Panc1 (cell line): ENCODE measurements at regions of chr9 and their contacts with region 1.

Region 1: DNA sequence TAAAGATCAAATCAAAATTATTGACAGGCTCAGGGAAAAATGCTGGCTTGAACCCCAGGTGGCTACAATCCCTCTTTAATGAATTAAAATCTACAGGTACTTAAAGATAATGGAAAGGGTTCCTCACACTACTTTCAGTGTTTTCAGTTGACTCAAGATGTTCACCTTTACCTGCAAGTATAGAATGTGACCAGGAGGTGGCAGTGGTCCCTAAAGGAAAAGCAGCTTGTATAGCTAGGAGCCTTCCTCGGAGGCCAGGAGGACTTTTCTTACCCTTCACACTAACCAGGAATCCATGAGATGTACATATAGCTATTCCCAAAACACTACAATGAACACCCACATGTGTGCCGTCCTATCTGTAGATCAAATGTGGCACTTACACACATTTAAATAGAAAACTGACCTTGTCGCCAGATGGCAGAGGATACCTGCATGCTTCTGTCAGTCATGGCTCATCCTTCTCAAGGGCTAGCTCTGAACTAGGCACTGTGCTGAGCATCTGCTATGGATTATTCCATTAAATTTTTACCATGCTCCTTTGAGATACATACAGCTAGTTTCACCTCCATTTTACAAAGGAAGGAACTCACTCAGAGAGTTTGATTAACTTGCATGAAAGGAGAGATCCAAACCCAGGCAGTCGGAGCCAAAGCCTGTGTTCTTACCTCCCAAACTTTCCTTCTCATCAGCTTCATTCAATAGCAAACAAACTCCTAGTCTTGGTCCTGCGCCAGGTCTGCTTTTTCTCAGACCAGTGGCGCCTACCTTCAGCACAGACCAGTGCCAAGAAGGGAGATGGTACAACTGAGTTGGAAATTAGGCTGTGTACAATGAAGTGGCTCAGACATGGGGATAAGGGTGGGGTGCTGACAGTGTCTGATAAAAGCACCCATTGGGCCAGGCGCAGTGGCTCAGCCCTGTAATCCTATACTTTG is 24.5 kb downstream of the C9orf152 start:
- DNase-seq: peak; percentile 50
- ATAC-seq: peak; percentile 91
- H3K4me3 ChIP-seq: no peak overlapping the region
- H3K27ac ChIP-seq: no peak overlapping the region
- H3K4me1 ChIP-seq: no peaks in the 10 kb centered on the region
- H3K27me3 ChIP-seq: no peaks in the 10 kb centered on the region
- CTCF ChIP-seq: peak; percentile 69

Region 2: DNA sequence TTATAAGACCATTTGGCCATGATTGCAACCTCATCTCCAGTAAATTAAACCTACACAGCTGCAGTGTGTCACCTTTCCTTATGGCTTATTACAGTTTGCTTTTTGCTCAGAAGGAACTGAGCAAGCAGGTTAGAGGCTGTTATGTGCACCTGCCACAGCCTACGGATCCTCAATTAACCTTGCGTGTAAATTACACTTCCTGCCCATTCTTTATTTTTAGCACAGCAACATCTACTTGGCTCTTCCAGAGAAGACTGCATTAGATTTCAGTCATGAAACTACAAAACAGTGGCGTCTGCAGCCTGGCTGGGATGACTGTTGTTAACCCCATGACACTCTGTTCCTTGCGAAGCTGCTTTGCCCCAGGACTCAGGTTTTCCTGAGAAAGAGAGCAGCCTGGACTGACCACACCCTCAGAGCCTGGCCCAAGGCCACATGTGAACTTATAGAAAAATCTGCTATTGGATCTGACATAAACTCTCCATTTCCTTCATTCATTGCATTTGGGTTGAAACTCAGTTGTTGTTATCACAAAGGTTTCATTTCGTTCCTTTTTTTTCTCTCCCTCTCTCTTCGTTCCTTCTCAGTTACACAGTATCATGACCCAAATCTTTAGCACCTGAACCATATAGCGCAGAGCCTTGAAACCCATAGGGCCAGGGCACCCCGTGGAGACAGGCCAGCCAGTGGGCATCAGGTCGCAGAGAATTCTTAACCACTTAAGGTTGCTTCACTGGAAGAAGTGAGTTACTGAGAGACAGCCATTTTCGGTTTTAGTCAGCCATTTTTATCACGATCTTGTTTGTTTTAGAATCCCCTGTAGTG is 264.9 kb before region 1 on chr9:
- CTCF ChIA-PET with region 1: no interaction called
- POLR2A ChIA-PET with region 1: no interaction called
- in situ Hi-C with region 1: no loop called
- intact Hi-C with region 1: no loop called
- DNase-seq: no peak
- ATAC-seq: no peak
- H3K4me3 ChIP-seq: no peak overlapping the region
- H3K27ac ChIP-seq: no peak overlapping the region
- H3K4me1 ChIP-seq: no peaks in the 10 kb centered on the region
- H3K27me3 ChIP-seq: no peaks in the 10 kb centered on the region
- CTCF ChIP-seq: no peak

Region 3: DNA sequence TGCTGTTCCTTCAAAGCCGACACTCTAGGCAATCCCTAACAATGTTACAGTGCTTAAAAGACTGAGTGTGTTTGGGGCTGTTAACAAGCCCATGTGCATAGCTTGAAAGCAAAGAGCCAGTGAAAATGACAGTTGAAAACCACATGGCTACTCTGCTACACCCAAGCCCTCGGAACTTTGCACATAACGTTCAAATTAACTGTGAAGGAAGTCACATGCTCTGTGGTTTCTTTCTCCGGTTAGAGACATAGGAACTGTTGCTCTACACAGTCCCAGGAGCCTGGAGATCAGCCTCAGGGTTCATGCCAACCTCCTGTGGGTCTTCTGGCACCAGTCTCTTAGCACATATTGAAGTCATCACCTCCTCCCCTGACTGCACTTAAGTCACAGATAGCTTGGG is 26.6 kb before region 1 on chr9:
- CTCF ChIA-PET with region 1: no interaction called
- POLR2A ChIA-PET with region 1: no interaction called
- in situ Hi-C with region 1: no loop called
- intact Hi-C with region 1: no loop called
- DNase-seq: no peak
- ATAC-seq: no peak
- H3K4me3 ChIP-seq: no peak overlapping the region
- H3K27ac ChIP-seq: no peak overlapping the region
- H3K4me1 ChIP-seq: no peaks in the 10 kb centered on the region
- H3K27me3 ChIP-seq: no peaks in the 10 kb centered on the region
- CTCF ChIP-seq: no peak

Region 4: DNA sequence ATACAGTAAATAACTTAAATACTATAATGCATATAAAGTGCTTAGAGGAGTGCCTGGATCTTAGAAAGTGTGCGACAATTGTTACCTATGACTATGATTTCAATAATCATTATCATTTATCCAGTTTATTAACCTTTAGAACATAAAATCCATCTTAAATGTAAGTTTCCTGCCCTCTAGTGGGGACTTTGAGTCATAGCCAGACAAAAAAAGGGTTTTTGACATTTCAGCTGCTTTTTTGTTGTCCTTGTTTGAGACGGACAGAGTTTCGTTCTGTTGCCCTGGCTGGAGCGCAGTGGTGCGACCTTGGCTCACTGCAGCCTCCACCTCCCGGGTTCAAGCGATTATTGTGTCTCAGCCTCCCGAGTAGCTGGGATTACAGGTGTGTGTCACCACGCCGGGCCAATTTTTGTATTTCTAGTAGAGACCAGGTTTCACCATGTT is 34.2 kb after region 1 on chr9:
- CTCF ChIA-PET with region 1: interaction called, 7 read pairs
- POLR2A ChIA-PET with region 1: no interaction called
- in situ Hi-C with region 1: no loop called
- intact Hi-C with region 1: loop called (anchors 5 kb)
- DNase-seq: no peak
- ATAC-seq: no peak
- H3K4me3 ChIP-seq: no peak overlapping the region
- H3K27ac ChIP-seq: no peak overlapping the region
- H3K4me1 ChIP-seq: no peaks in the 10 kb centered on the region
- H3K27me3 ChIP-seq: no peaks in the 10 kb centered on the region
- CTCF ChIP-seq: peak; percentile 75

Region 5: GRCh38 chr9:110443146-110443865 is 259.8 kb after region 1 on chr9:
- CTCF ChIA-PET with region 1: no interaction called
- POLR2A ChIA-PET with region 1: no interaction called
- in situ Hi-C with region 1: no loop called
- intact Hi-C with region 1: loop called (anchors 10 kb)
- DNase-seq: no peak
- ATAC-seq: no peak
- H3K4me3 ChIP-seq: no peak overlapping the region
- H3K27ac ChIP-seq: no peak overlapping the region
- H3K4me1 ChIP-seq: no peaks in the 10 kb centered on the region
- H3K27me3 ChIP-seq: no peaks in the 10 kb centered on the region
- CTCF ChIP-seq: no peak